ENCODE measurements at regions of chr19 and their contacts with region 1.

Region 1: GRCh38 chr19:7989071-7989575 is 16.3 kb downstream of the ELAVL1 start:
- DNase-seq: no peak
- ATAC-seq: peak; percentile 52; the same call in 1 of the 2 replicates
- H3K4me3 ChIP-seq: no peak overlapping the region
- H3K27ac ChIP-seq: peak overlapping the region; percentile 33
- H3K4me1 ChIP-seq: peaks cover 7% of the 10 kb centered on the region in 2 experiments; a peak in 3 of 4 replicates
- H3K27me3 ChIP-seq: no peaks in the 10 kb centered on the region
- CTCF ChIP-seq: no peak
- POLR2A ChIP-seq: no peak
- RAD21 ChIP-seq: no peak

Region 2: GRCh38 chr19:8005534-8006256 is 16.6 kb after region 1 on chr19 and contains the start of gene ELAVL1:
- CTCF ChIA-PET with region 1: interaction called, 11 read pairs
- POLR2A ChIA-PET with region 1: no interaction called
- RAD21 ChIA-PET with region 1: no interaction called
- intact Hi-C with region 1: no loop called
- DNase-seq: peak; percentile 73
- ATAC-seq: peak; percentile 83
- H3K4me3 ChIP-seq: peak within 1 kb of the TSS; percentile 87 to 96
- H3K27ac ChIP-seq: peak within 1 kb of the TSS; percentile 68
- H3K4me1 ChIP-seq: peaks cover 21 to 40% of the 10 kb centered on the region in 2 experiments
- H3K27me3 ChIP-seq: no peaks in the 10 kb centered on the region
- CTCF ChIP-seq: no peak
- POLR2A ChIP-seq: peak; percentile 35
- RAD21 ChIP-seq: no peak
- total RNA-seq, gene ELAVL1: 134 TPM

Region 3: GRCh38 chr19:8148410-8149231 is 159.5 kb after region 1 on chr19:
- CTCF ChIA-PET with region 1: no interaction called
- POLR2A ChIA-PET with region 1: no interaction called
- RAD21 ChIA-PET with region 1: no interaction called
- intact Hi-C with region 1: no loop called
- DNase-seq: peak; percentile 24
- ATAC-seq: peak; percentile 80
- H3K4me3 ChIP-seq: peak overlapping the region; percentile 51 to 70
- H3K27ac ChIP-seq: no peak overlapping the region; the same call in 1 of the 2 replicates
- H3K4me1 ChIP-seq: peaks cover 8 to 30% of the 10 kb centered on the region in 2 experiments; a peak in 3 of 4 replicates
- H3K27me3 ChIP-seq: no peaks in the 10 kb centered on the region
- CTCF ChIP-seq: no peak
- POLR2A ChIP-seq: no peak
- RAD21 ChIP-seq: no peak